GM12878 (cell line): ENCODE measurements at regions of chr3 and their contacts with region 1.

Region 1: GRCh38 chr3:14921078-14921616 is 26.2 kb upstream of the NR2C2 start:
- DNase-seq: no peak
- ATAC-seq: peak; percentile 97
- H3K4me3 ChIP-seq: no peak overlapping the region
- H3K27ac ChIP-seq: no peak overlapping the region
- H3K4me1 ChIP-seq: no peaks in the 10 kb centered on the region
- H3K27me3 ChIP-seq: no peaks in the 10 kb centered on the region
- CTCF ChIP-seq: peak; percentile 97 to 99 (median 98); a peak in 5 of 6 replicates
- EP300 ChIP-seq: no peak
- POLR2A ChIP-seq: no peak
- RAD21 ChIP-seq: peak; percentile 98

Region 2: GRCh38 chr3:14633819-14634424 is 287.2 kb before region 1 on chr3:
- CTCF ChIA-PET with region 1: interaction called, 10 read pairs
- POLR2A ChIA-PET with region 1: no interaction called
- RAD21 ChIA-PET with region 1: interaction called, 12 read pairs
- SMC1A ChIA-PET with region 1: interaction called, 5 read pairs
- in situ Hi-C with region 1: loop called (anchors 5 kb)
- intact Hi-C with region 1: loop called (anchors 1 kb)
- DNase-seq: peak; percentile 17
- ATAC-seq: peak; percentile 98
- H3K4me3 ChIP-seq: no peak overlapping the region
- H3K27ac ChIP-seq: no peak overlapping the region
- H3K4me1 ChIP-seq: no peaks in the 10 kb centered on the region
- H3K27me3 ChIP-seq: peaks cover under 1 to 6% of the 10 kb centered on the region in 2 experiments; a peak in 3 of 4 replicates
- CTCF ChIP-seq: peak; percentile 70 to 92 (median 85)
- EP300 ChIP-seq: no peak
- POLR2A ChIP-seq: no peak
- RAD21 ChIP-seq: peak; percentile 64

Region 3: GRCh38 chr3:14796403-14797077 is 124.6 kb before region 1 on chr3:
- CTCF ChIA-PET with region 1: interaction called, 46 read pairs
- POLR2A ChIA-PET with region 1: no interaction called
- RAD21 ChIA-PET with region 1: interaction called, 28 read pairs
- SMC1A ChIA-PET with region 1: interaction called, 5 read pairs
- in situ Hi-C with region 1: loop called (anchors 5 kb)
- intact Hi-C with region 1: loop called (anchors 1 kb)
- DNase-seq: no peak
- ATAC-seq: no peak
- H3K4me3 ChIP-seq: no peak overlapping the region
- H3K27ac ChIP-seq: no peak overlapping the region
- H3K4me1 ChIP-seq: no peaks in the 10 kb centered on the region
- H3K27me3 ChIP-seq: peaks cover 1 to 2% of the 10 kb centered on the region in 2 experiments; a peak in 2 of 4 replicates
- CTCF ChIP-seq: no peak
- EP300 ChIP-seq: no peak
- POLR2A ChIP-seq: no peak
- RAD21 ChIP-seq: no peak

Region 4: DNA sequence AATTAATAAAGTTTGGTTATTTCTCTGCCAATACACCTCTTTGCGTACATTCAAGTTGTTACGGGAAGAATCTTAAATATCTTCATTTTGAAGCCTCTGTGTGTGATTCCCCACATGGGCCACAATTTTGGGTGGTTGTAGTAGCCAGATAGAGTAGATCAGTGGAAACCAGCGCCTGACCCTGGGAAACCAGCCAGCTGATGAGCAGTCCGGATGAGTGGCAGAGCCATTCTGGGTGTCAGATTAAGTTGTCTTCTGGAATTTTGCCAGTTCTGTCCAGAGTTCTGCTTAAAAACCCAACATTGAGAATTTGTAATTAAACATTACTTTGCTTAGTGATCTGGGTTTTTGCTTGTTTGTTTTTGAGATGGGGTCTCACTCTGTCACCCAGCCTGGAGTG is 94.3 kb after region 1 on chr3:
- CTCF ChIA-PET with region 1: interaction called, 3 read pairs
- POLR2A ChIA-PET with region 1: no interaction called
- RAD21 ChIA-PET with region 1: no interaction called
- SMC1A ChIA-PET with region 1: no interaction called
- in situ Hi-C with region 1: no loop called
- intact Hi-C with region 1: loop called (anchors 5 kb)
- DNase-seq: no peak
- ATAC-seq: no peak
- H3K4me3 ChIP-seq: no peak overlapping the region
- H3K27ac ChIP-seq: no peak overlapping the region
- H3K4me1 ChIP-seq: no peaks in the 10 kb centered on the region
- H3K27me3 ChIP-seq: no peaks in the 10 kb centered on the region
- CTCF ChIP-seq: no peak
- EP300 ChIP-seq: no peak
- POLR2A ChIP-seq: no peak
- RAD21 ChIP-seq: no peak

Region 5: GRCh38 chr3:15108082-15108545 is 187.0 kb after region 1 on chr3:
- CTCF ChIA-PET with region 1: interaction called, 12 read pairs
- POLR2A ChIA-PET with region 1: interaction called, 5 read pairs
- RAD21 ChIA-PET with region 1: interaction called, 5 read pairs
- SMC1A ChIA-PET with region 1: interaction called, 3 read pairs
- in situ Hi-C with region 1: no loop called
- intact Hi-C with region 1: no loop called
- DNase-seq: no peak
- ATAC-seq: peak; percentile 99
- H3K4me3 ChIP-seq: no peak overlapping the region
- H3K27ac ChIP-seq: no peak overlapping the region
- H3K4me1 ChIP-seq: no peaks in the 10 kb centered on the region
- H3K27me3 ChIP-seq: no peaks in the 10 kb centered on the region
- CTCF ChIP-seq: peak; percentile 94 to 98 (median 94)
- EP300 ChIP-seq: no peak
- POLR2A ChIP-seq: no peak
- RAD21 ChIP-seq: peak; percentile 82